ENCODE measurements at regions of chr9 and their contacts with region 1.

Region 1: DNA sequence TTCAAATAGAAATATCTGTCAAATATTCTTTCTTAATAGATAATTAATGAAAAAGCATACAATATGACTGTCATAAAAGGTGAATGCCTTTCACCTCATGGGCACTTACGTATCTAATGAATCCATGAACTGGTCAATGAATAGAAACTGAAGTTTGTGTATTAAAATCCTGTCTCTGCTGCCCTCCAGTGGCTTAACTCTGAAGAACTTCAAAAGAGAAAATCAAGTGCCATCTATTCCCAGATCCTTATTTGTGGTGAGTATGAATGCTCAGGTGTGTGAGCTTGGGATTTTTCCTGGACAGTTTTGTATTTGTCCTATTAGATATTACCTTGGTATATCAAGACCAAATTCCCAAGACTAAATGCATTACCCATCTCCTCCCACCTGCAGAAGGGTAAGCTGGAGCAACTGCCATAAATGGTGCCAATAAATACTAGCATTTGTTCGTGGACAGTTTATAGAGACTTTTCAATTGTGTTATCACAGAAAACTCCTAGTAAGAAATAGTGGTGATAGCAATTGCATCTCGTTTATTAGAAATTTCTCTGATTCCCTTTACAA is 44.0 kb upstream of the SVEP1 start:
- DNase-seq: no peak
- ATAC-seq: peak in 1 of 2 donors; percentile 24

Region 2: GRCh38 chr9:110308633-110309038 is 314.9 kb before region 1 on chr9:
- intact Hi-C with region 1: no loop called
- DNase-seq: no peak
- ATAC-seq: no peak

Region 3: GRCh38 chr9:110452227-110452801 is 171.2 kb before region 1 on chr9:
- intact Hi-C with region 1: loop called in 1 of 2 experiments (anchors 5 kb)
- DNase-seq: no peak
- ATAC-seq: no peak

Region 4: DNA sequence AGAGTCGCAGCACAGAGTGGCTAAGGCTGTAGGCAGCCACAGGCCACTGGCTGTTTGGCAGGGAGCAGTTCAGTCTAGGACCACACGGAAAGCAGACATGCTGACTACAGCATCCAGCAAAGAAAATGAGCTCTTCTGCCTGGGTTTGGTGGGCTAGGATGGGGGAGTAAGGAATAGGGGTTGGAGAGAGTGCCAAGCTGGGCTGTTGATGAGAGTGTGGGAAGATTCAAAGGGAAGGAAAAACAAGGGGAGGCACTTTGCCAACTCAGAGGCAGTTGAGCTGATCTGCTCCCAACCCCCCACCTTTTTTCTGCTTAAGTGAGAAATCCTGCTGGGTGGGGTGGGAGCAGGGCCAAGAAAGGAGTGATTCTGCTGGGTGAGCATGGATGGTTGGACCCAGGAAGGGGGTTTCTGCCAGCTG is 79.9 kb before region 1 on chr9:
- intact Hi-C with region 1: no loop called
- DNase-seq: peak; percentile 34
- ATAC-seq: peak; percentile 67 to 68

Region 5: GRCh38 chr9:110767559-110768063 is 144.1 kb after region 1 on chr9:
- intact Hi-C with region 1: no loop called
- DNase-seq: peak; percentile 50
- ATAC-seq: peak; percentile 65 to 98

Region 6: GRCh38 chr9:110895147-110895905 is 271.8 kb after region 1 on chr9:
- intact Hi-C with region 1: no loop called
- DNase-seq: peak; percentile 55
- ATAC-seq: peak; percentile 87 to 89